ENCODE measurements at regions of chr7 and their contacts with region 1.

Region 1: GRCh38 chr7:17696443-17696842 is 243.9 kb downstream of the SNX13 start:
- DNase-seq: peak; percentile 100
- H3K4me3 ChIP-seq: no peak overlapping the region
- H3K27ac ChIP-seq: peak overlapping the region; percentile 99
- H3K4me1 ChIP-seq: peaks cover 21% of the 10 kb centered on the region
- H3K27me3 ChIP-seq: no peaks in the 10 kb centered on the region
- CTCF ChIP-seq: no peak

Region 2: DNA sequence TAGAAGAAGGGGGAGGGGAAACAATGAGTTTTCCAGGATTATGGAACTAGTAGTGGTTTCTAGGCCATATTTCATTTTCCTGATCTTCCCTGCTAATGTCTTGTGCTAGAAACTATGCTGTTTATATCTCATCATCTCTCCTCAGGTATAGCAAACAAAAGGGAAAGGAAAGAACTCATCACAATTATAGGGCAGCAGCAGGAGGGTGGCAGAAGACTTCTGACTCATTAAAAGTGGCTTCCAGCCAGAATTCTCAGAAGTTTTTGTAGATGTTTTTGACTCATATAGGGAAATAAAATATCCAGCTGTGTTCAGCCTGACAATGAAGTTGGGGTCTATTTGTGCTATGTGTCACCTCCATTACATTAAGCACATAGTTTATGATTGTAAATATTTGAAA is 391.5 kb before region 1 on chr7:
- CTCF ChIA-PET with region 1: no interaction called
- dilution Hi-C with region 1: no loop called
- in situ Hi-C with region 1: no loop called
- intact Hi-C with region 1: loop called (anchors 5 kb)
- DNase-seq: peak; percentile 91
- H3K4me3 ChIP-seq: peak overlapping the region; percentile 15 to 71 (median 36)
- H3K27ac ChIP-seq: peak overlapping the region; percentile 77
- H3K4me1 ChIP-seq: peaks cover 42% of the 10 kb centered on the region
- H3K27me3 ChIP-seq: no peaks in the 10 kb centered on the region
- CTCF ChIP-seq: no peak

Region 3: GRCh38 chr7:17646253-17646956 is 50.0 kb before region 1 on chr7:
- CTCF ChIA-PET with region 1: no interaction called
- dilution Hi-C with region 1: no loop called
- in situ Hi-C with region 1: no loop called
- intact Hi-C with region 1: loop called (anchors 5 kb)
- DNase-seq: peak; percentile 57
- H3K4me3 ChIP-seq: no peak overlapping the region
- H3K27ac ChIP-seq: no peak overlapping the region
- H3K4me1 ChIP-seq: peaks cover 8% of the 10 kb centered on the region
- H3K27me3 ChIP-seq: no peaks in the 10 kb centered on the region
- CTCF ChIP-seq: peak; percentile 40 to 53

Region 4: GRCh38 chr7:17663061-17663675 is 33.3 kb before region 1 on chr7:
- CTCF ChIA-PET with region 1: no interaction called
- dilution Hi-C with region 1: no loop called
- in situ Hi-C with region 1: no loop called
- intact Hi-C with region 1: loop called (anchors 1 kb)
- DNase-seq: peak; percentile 69
- H3K4me3 ChIP-seq: no peak overlapping the region
- H3K27ac ChIP-seq: peak overlapping the region; percentile 90
- H3K4me1 ChIP-seq: peaks cover 34% of the 10 kb centered on the region
- H3K27me3 ChIP-seq: no peaks in the 10 kb centered on the region
- CTCF ChIP-seq: no peak

Region 5: GRCh38 chr7:17674166-17674961 is 22.1 kb before region 1 on chr7:
- CTCF ChIA-PET with region 1: no interaction called
- dilution Hi-C with region 1: no loop called
- in situ Hi-C with region 1: no loop called
- intact Hi-C with region 1: loop called (anchors 1 kb)
- DNase-seq: peak; percentile 94
- H3K4me3 ChIP-seq: no peak overlapping the region
- H3K27ac ChIP-seq: peak overlapping the region; percentile 94
- H3K4me1 ChIP-seq: peaks cover 54% of the 10 kb centered on the region
- H3K27me3 ChIP-seq: no peaks in the 10 kb centered on the region
- CTCF ChIP-seq: no peak

Region 6: DNA sequence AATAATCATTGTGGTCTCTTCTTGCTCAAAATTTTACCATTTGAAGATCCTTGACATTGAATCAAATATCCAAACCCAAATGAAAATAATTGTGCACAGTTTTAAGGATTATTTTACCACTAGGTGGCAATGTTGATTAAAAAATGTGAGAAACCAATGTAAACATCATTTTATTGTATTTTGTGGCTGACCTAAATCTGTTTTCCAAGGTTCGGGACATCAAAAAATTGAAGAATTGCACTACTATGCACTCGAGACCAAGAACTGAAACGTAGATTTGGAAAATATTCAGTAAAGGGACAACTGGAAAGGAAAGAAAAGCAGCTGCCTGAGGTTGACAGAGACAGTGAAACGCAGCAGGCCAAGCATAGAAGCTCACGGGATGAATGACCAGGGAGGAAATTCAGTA is 15.5 kb before region 1 on chr7:
- CTCF ChIA-PET with region 1: no interaction called
- dilution Hi-C with region 1: no loop called
- in situ Hi-C with region 1: no loop called
- intact Hi-C with region 1: loop called (anchors 1 kb)
- DNase-seq: peak; percentile 61
- H3K4me3 ChIP-seq: no peak overlapping the region
- H3K27ac ChIP-seq: peak overlapping the region; percentile 94
- H3K4me1 ChIP-seq: peaks cover 50% of the 10 kb centered on the region
- H3K27me3 ChIP-seq: no peaks in the 10 kb centered on the region
- CTCF ChIP-seq: peak; percentile 39 to 43

Measured in mammary epithelial cell (primary cell).